Posterior vena cava (tissue), 2 donors: ENCODE measurements at regions of chr4 and their contacts with region 1.

Region 1: GRCh38 chr4:6709230-6710114 is at the start of gene MRFAP1L1:
- DNase-seq: peak; percentile 98
- total RNA-seq, gene MRFAP1L1: 35.9 to 43.8 TPM

Region 2: DNA sequence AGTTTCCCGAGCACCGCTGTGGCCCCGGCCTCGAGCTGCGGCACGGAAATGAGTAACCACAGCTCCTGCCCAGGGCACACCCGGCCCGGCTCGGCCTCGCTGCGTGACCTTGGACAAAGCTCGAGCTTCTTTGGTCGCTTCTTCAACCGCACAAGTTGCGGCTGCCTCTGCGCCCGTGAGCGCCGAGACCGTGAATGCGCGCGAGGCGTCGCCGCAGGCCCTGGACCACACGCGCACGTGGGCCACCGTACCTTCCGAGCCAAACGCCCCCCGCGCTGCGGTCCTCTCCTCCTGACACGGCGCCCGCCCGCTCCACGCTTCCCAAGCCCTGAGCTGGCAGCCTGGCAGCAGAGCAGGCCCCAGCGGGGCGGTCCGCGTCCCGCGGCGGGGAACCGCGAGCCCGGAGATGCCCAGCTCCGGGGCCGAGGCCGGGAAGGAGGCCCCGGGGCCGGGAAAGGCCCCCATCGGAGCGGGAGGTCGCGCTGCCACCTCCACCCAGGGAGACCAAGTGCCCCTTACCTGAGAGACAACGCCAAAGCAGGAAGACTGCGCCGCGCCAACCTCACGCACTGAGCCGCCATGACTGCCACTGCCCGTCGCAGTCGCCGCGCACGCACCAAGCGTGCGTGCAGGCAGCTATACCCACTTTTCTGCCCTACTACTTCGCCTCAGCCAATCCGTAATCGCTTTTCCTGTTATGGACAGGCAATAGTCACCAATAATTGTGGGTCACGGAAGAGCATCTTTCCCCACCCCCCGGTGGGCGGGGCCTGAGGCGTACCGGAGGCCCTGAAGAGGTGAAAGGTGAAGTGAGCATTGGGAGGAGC is 358.2 kb after region 1 on chr4 and contains the start of gene GRPEL1:
- intact Hi-C with region 1: loop called in 1 of 2 experiments (anchors 10 kb)
- DNase-seq: peak; percentile 93
- total RNA-seq, gene GRPEL1: 22.2 to 22.6 TPM

Region 3: GRCh38 chr4:7323872-7324650 is 614.6 kb after region 1 on chr4:
- intact Hi-C with region 1: no loop called
- DNase-seq: no peak